ENCODE measurements at regions of chr12 and their contacts with region 1.

Region 1: GRCh38 chr12:95117178-95117599 is 43.8 kb upstream of the NR2C1 start:
- DNase-seq: peak in 2 of 3 donors; percentile 61 to 74
- ATAC-seq: peak; percentile 91 to 92
- H3K4me3 ChIP-seq: no peak overlapping the region
- H3K27ac ChIP-seq: no peak overlapping the region
- H3K4me1 ChIP-seq: peaks cover 5% of the 10 kb centered on the region
- H3K27me3 ChIP-seq: no peaks in the 10 kb centered on the region

Region 2: GRCh38 chr12:95173392-95174251 is 56.4 kb after region 1 on chr12:
- intact Hi-C with region 1: no loop called
- DNase-seq: peak; percentile 78 to 91 (median 82)
- ATAC-seq: peak; percentile 88 to 93
- H3K4me3 ChIP-seq: no peak overlapping the region
- H3K27ac ChIP-seq: peak overlapping the region; percentile 42
- H3K4me1 ChIP-seq: peaks cover 6% of the 10 kb centered on the region
- H3K27me3 ChIP-seq: no peaks in the 10 kb centered on the region

Region 3: GRCh38 chr12:95336390-95337067 is 219.3 kb after region 1 on chr12:
- intact Hi-C with region 1: loop called (anchors 2 to 5 kb)
- DNase-seq: peak; percentile 60 to 84 (median 79)
- ATAC-seq: peak; percentile 93 to 94
- H3K4me3 ChIP-seq: no peak overlapping the region
- H3K27ac ChIP-seq: peak overlapping the region; percentile 17
- H3K4me1 ChIP-seq: no peaks in the 10 kb centered on the region
- H3K27me3 ChIP-seq: no peaks in the 10 kb centered on the region